ENCODE measurements at regions of chr3 and their contacts with region 1.

Region 1: DNA sequence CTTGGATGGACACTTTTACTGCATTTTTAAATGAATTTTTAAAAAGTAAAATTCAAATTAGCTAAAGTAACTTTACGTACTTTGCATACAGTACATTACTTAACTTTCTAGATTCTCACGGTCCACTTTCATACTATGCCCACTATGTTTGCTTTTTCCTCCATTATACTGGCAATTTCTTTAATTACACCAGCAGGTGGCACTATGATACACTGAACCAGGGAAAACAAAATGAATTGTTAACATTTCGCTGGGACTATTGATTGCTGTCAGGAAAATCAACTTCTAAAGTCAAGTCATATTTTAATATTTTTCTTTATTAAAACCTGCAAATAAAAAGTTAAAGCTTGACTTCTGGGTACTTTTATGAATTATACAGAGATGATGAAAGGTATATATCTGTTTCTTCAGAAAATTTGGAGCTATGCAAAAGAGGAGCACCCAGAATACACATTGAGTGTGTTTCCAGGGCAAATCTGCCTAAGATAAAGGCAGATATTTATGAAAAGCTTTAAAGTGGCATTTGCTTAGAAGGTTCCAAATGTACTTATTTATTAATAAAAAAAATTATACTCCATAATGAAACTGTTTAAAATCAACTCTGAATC is 21.8 kb upstream of the POU1F1 start:
- DNase-seq: no peak
- H3K4me3 ChIP-seq: no peak overlapping the region
- H3K27ac ChIP-seq: no peak overlapping the region
- H3K4me1 ChIP-seq: no peaks in the 10 kb centered on the region
- H3K27me3 ChIP-seq: no peaks in the 10 kb centered on the region
- CTCF ChIP-seq: peak in 2 of 3 experiments; percentile 34 to 52; a peak in 2 of 4 replicates
- EP300 ChIP-seq: no peak
- POLR2A ChIP-seq: no peak
- RAD21 ChIP-seq: peak; percentile 75

Region 2: GRCh38 chr3:87503900-87504508 is 205.8 kb after region 1 on chr3:
- CTCF ChIA-PET with region 1: interaction called, 12 read pairs
- POLR2A ChIA-PET with region 1: no interaction called
- DNase-seq: peak in 1 of 2 experiments; percentile 2
- H3K4me3 ChIP-seq: no peak overlapping the region
- H3K27ac ChIP-seq: no peak overlapping the region
- H3K4me1 ChIP-seq: no peaks in the 10 kb centered on the region
- H3K27me3 ChIP-seq: no peaks in the 10 kb centered on the region
- CTCF ChIP-seq: peak in 2 of 3 experiments; percentile 67 to 74; a peak in 3 of 4 replicates
- EP300 ChIP-seq: no peak
- POLR2A ChIP-seq: no peak
- RAD21 ChIP-seq: peak; percentile 85 to 86